GM10248 (cell line): ENCODE measurements at regions of chr1 and their contacts with region 1.

Region 1: GRCh38 chr1:212959266-212960220 is 9.2 kb downstream of the VASH2 start:
- DNase-seq: peak; percentile 85
- CTCF ChIP-seq: no peak

Region 2: GRCh38 chr1:212920896-212921295 is 38.6 kb before region 1 on chr1:
- CTCF ChIA-PET with region 1: interaction called, 10 read pairs
- POLR2A ChIA-PET with region 1: no interaction called
- DNase-seq: peak; percentile 57
- CTCF ChIP-seq: peak; percentile 42

Region 3: GRCh38 chr1:213094446-213094845 is 134.9 kb after region 1 on chr1:
- CTCF ChIA-PET with region 1: no interaction called
- POLR2A ChIA-PET with region 1: no interaction called
- DNase-seq: no peak
- CTCF ChIP-seq: no peak